ENCODE measurements at regions of chr2 and their contacts with region 1.

Region 1: GRCh38 chr2:175282290-175282689 is 100.8 kb upstream of the ATP5MC3 start:
- DNase-seq: peak in 3 of 14 experiments; percentile 13 to 37 (median 23)
- ATAC-seq: peak; percentile 44
- H3K4me3 ChIP-seq: no peak overlapping the region
- H3K4me3 Mint-ChIP-seq: no peak overlapping the region
- H3K27ac ChIP-seq: no peak overlapping the region
- H3K27ac Mint-ChIP-seq: no peak overlapping the region
- H3K4me1 ChIP-seq: no peaks in the 10 kb centered on the region
- H3K4me1 Mint-ChIP-seq: no peaks in the 10 kb centered on the region
- H3K27me3 ChIP-seq: no peaks in the 10 kb centered on the region
- H3K27me3 Mint-ChIP-seq: peaks cover 7% of the 10 kb centered on the region
- CTCF ChIP-seq: peak; percentile 45

Region 2: DNA sequence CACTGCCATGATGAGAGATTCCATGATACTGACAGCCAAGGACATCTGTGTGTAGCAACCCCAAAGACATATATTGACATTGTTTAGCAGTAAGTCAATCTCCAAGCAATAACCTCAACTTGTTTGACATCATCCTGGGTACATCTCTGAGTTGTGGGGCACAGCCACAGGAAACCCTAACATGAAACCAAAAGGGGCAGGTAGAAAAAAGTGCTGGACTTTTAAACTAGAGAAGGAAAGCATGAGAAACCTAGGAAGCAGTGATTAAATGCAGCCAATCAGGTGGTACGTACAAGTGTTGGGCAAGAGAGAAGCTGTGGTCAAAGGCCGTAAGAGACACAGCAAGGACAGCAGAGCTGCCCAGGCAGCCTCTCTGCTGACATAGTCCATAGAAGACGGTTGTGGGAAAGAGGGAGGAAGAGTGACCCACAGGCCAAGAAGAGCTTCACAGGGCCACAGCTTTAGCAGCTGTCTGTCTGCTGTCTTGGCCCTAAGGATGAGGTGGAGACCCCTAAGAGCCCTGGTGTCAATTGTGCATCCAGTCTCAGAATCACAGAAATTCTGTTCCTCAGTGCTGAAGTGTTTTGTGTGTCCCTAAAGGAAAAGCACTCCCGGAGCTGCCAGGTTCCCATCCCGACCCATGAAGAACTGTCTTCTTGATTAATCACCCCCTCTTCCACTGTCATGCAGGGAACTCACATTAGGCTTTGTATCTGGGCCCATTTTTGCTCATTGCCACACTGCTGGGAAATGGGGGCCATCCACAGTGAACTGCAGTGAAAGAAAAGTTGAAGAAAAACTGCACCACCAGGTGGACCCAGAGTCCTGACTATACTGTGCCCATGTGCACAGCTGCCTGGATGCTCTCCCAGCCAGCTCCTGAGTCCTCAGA is 251.7 kb before region 1 on chr2:
- CTCF ChIA-PET with region 1: no interaction called
- POLR2A ChIA-PET with region 1: no interaction called
- intact Hi-C with region 1: loop called in 1 of 2 experiments (anchors 10 kb)
- DNase-seq: peak in 1 of 14 experiments; percentile 18
- ATAC-seq: no peak
- H3K4me3 ChIP-seq: no peak overlapping the region
- H3K4me3 Mint-ChIP-seq: no peak overlapping the region
- H3K27ac ChIP-seq: no peak overlapping the region
- H3K27ac Mint-ChIP-seq: no peak overlapping the region
- H3K4me1 ChIP-seq: no peaks in the 10 kb centered on the region
- H3K4me1 Mint-ChIP-seq: no peaks in the 10 kb centered on the region
- H3K27me3 ChIP-seq: no peaks in the 10 kb centered on the region
- H3K27me3 Mint-ChIP-seq: no peaks in the 10 kb centered on the region
- CTCF ChIP-seq: no peak

Measured in CD4-positive, alpha-beta T cell (primary cell).